Left ventricle myocardium inferior (tissue), 1 donor: ENCODE measurements at regions of chr11 and their contacts with region 1.

Region 1: DNA sequence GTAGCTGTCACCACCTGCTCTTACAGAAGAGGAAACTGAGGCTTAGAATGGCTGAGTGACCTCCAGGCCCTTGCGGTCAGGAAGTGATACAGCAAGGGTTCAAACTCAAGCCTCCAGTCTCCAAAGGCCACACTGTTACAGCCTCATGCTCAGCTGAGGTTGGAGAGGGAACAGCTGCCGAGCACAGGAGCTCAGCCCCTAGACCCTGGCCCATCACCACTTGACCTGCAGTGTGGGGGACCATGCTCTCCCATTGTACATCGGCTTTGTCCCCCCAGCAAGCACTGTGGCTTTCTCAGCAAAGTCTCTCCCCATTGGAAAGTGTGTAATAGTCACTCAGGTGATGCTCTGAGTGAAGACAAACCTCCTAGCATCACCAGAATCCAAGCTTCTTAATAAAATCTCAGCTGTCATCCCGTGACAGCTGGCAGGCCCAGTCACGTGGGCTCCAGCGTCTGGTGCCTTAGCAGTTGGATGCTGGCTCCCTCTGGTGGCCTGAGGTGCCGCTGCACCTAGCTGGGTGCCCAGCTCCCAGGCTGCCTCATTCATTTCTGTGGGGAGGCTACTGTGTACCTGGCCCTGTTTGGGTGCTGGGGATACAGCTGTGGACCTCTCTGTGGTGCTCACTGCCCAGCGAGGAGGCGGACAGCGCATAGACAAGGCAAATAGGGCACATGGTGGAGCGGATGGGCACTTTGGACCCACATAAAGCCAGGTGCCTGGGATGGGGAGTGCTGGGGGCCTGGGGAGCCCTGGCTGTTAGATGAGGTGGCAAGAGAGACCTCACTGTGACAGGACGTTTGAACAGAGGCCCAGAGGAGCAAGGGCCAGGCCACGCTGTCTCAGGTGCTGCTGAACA is 19.1 kb upstream of the MYRF start:
- DNase-seq: peak; percentile 87
- H3K4me3 ChIP-seq: no peak overlapping the region
- H3K27ac ChIP-seq: peak overlapping the region; percentile 24
- H3K4me1 ChIP-seq: peaks cover 20% of the 10 kb centered on the region
- H3K27me3 ChIP-seq: no peaks in the 10 kb centered on the region
- CTCF ChIP-seq: peak; percentile 100

Region 2: GRCh38 chr11:61417670-61418069 is 315.7 kb before region 1 on chr11:
- intact Hi-C with region 1: no loop called
- DNase-seq: no peak
- H3K4me3 ChIP-seq: no peak overlapping the region
- H3K27ac ChIP-seq: peak overlapping the region; percentile 2
- H3K4me1 ChIP-seq: peaks cover 19% of the 10 kb centered on the region
- H3K27me3 ChIP-seq: no peaks in the 10 kb centered on the region
- CTCF ChIP-seq: no peak

Region 3: DNA sequence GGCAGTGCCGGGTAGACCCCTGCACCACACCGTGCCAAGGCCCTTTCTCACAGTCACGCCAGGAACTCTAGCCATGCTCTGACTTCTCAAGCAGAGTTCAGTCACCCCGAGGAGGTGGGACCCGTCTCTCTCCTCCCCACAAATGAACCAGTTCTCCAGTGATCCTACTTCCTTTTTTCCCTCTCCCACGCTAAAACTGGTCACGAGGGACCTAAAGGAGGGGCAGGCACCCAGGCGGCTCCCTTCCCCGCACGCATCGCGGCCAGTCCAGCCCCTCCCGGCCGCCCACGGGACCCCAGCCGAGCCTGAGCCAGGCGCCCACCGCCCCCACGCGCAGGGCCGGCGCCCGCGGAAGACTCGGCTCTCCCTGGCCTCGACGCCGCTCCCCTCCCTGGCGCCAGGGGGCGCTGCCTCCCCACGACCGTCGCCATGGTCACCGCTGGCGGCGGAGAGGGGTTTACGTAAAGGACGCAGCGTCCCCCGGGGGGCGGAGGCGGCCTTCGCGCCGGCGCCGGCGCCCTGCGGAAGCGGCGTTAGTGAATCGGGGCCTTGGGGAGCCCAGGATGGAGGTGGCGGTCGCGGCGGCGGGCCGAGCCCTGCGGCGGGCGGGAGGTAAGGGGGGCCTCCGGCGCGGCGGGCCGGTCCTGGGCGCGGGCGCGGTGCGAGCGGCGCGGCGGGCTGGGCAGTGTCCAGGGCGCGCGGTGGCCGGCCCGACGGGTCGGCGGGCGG is 53.3 kb before region 1 on chr11 and contains the start of gene DAGLA:
- intact Hi-C with region 1: loop called (anchors 2 kb)
- DNase-seq: peak; percentile 70
- H3K4me3 ChIP-seq: peak within 1 kb of the TSS; percentile 71
- H3K27ac ChIP-seq: no peak within 1 kb of the TSS
- H3K4me1 ChIP-seq: peaks cover 48% of the 10 kb centered on the region
- H3K27me3 ChIP-seq: peaks cover 25% of the 10 kb centered on the region
- CTCF ChIP-seq: peak; percentile 96
- total RNA-seq, gene DAGLA: 3.2 TPM

Region 4: GRCh38 chr11:61803889-61804647 is 70.7 kb after region 1 on chr11:
- intact Hi-C with region 1: no loop called
- DNase-seq: no peak
- H3K4me3 ChIP-seq: no peak overlapping the region
- H3K27ac ChIP-seq: no peak overlapping the region
- H3K4me1 ChIP-seq: peaks cover 6% of the 10 kb centered on the region
- H3K27me3 ChIP-seq: no peaks in the 10 kb centered on the region
- CTCF ChIP-seq: no peak

Region 5: GRCh38 chr11:61881397-61881796 is 148.0 kb after region 1 on chr11:
- intact Hi-C with region 1: no loop called
- DNase-seq: no peak
- H3K4me3 ChIP-seq: no peak overlapping the region
- H3K27ac ChIP-seq: peak overlapping the region; percentile 79
- H3K4me1 ChIP-seq: peaks cover 98% of the 10 kb centered on the region
- H3K27me3 ChIP-seq: no peaks in the 10 kb centered on the region
- CTCF ChIP-seq: no peak

Region 6: GRCh38 chr11:61891331-61892084 is 158.2 kb after region 1 on chr11 and contains the start of gene FADS3:
- intact Hi-C with region 1: no loop called
- DNase-seq: peak; percentile 91
- H3K4me3 ChIP-seq: peak within 1 kb of the TSS; percentile 98
- H3K27ac ChIP-seq: peak within 1 kb of the TSS; percentile 98
- H3K4me1 ChIP-seq: peaks cover 51% of the 10 kb centered on the region
- H3K27me3 ChIP-seq: no peaks in the 10 kb centered on the region
- CTCF ChIP-seq: peak; percentile 7
- total RNA-seq, gene FADS3: 65.5 TPM